GM12878 (cell line): ENCODE measurements at regions of chr17 and their contacts with region 1.

Region 1: GRCh38 chr17:15048381-15048780 is 216.7 kb downstream of the PMP22 start:
- DNase-seq: no peak
- ATAC-seq: no peak
- H3K4me3 ChIP-seq: no peak overlapping the region
- H3K27ac ChIP-seq: no peak overlapping the region
- H3K4me1 ChIP-seq: no peaks in the 10 kb centered on the region
- H3K27me3 ChIP-seq: no peaks in the 10 kb centered on the region
- CTCF ChIP-seq: no peak
- EP300 ChIP-seq: no peak
- POLR2A ChIP-seq: no peak
- RAD21 ChIP-seq: no peak

Region 2: DNA sequence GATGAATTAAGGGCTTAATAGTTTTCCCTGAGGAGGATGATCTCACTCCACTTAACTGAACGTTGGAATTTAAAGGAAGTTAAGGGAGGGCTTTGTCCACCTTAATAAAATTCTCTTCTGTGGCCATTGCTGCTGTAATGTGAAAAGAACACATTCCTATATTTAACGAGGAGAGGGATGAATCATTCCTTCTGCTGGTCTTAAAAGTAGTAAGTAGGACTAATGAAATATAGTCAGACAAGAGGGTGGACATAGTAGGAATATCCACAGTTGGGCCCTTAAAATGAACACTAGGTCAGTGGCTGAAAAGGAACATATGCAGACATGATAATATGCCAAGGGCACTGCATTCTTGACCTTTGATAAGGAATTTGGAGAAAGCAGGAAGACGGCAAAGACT is 188.8 kb before region 1 on chr17:
- CTCF ChIA-PET with region 1: no interaction called
- POLR2A ChIA-PET with region 1: no interaction called
- RAD21 ChIA-PET with region 1: no interaction called
- SMC1A ChIA-PET with region 1: no interaction called
- in situ Hi-C with region 1: no loop called
- intact Hi-C with region 1: no loop called
- DNase-seq: no peak
- ATAC-seq: no peak
- H3K4me3 ChIP-seq: no peak overlapping the region
- H3K27ac ChIP-seq: no peak overlapping the region
- H3K4me1 ChIP-seq: no peaks in the 10 kb centered on the region
- H3K27me3 ChIP-seq: no peaks in the 10 kb centered on the region
- CTCF ChIP-seq: no peak
- EP300 ChIP-seq: no peak
- POLR2A ChIP-seq: no peak
- RAD21 ChIP-seq: no peak

Region 3: GRCh38 chr17:14986127-14986526 is 62.3 kb before region 1 on chr17:
- CTCF ChIA-PET with region 1: no interaction called
- POLR2A ChIA-PET with region 1: no interaction called
- RAD21 ChIA-PET with region 1: no interaction called
- SMC1A ChIA-PET with region 1: no interaction called
- in situ Hi-C with region 1: loop called (anchors 10 kb)
- intact Hi-C with region 1: no loop called
- DNase-seq: no peak
- ATAC-seq: no peak
- H3K4me3 ChIP-seq: no peak overlapping the region
- H3K27ac ChIP-seq: no peak overlapping the region
- H3K4me1 ChIP-seq: no peaks in the 10 kb centered on the region
- H3K27me3 ChIP-seq: no peaks in the 10 kb centered on the region
- CTCF ChIP-seq: no peak
- EP300 ChIP-seq: no peak
- POLR2A ChIP-seq: no peak
- RAD21 ChIP-seq: no peak

Region 4: GRCh38 chr17:15012351-15012980 is 35.9 kb before region 1 on chr17:
- CTCF ChIA-PET with region 1: no interaction called
- POLR2A ChIA-PET with region 1: no interaction called
- RAD21 ChIA-PET with region 1: no interaction called
- SMC1A ChIA-PET with region 1: no interaction called
- in situ Hi-C with region 1: no loop called
- intact Hi-C with region 1: no loop called
- DNase-seq: no peak
- ATAC-seq: no peak
- H3K4me3 ChIP-seq: no peak overlapping the region
- H3K27ac ChIP-seq: no peak overlapping the region
- H3K4me1 ChIP-seq: no peaks in the 10 kb centered on the region
- H3K27me3 ChIP-seq: no peaks in the 10 kb centered on the region
- CTCF ChIP-seq: no peak
- EP300 ChIP-seq: no peak
- POLR2A ChIP-seq: no peak
- RAD21 ChIP-seq: no peak